ENCODE measurements at regions of chr15 and their contacts with region 1.

Region 1: DNA sequence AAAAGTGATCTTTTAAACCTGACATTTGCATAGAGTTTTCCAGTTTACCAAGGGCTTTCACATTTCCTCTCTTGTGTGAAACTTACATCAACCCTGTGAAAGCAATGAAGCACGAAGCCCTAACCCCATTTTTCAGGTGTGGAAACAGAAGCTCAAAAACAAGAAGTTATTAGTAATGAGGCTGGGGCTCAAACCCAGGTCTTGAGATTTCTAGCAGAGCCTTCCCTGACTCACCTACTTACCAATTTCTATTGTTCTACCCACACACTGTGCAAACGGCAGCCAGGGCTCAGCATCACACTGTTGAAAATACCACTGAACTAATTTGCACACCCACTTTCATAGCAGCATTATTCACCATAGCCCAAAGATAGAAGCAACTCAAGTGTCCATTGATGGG is 117.8 kb upstream of the IGF1R start:
- DNase-seq: no peak
- ATAC-seq: no peak
- H3K4me3 ChIP-seq: no peak overlapping the region
- H3K27ac ChIP-seq: no peak overlapping the region
- H3K4me1 ChIP-seq: peaks cover 17% of the 10 kb centered on the region
- H3K27me3 ChIP-seq: no peaks in the 10 kb centered on the region
- CTCF ChIP-seq: no peak
- POLR2A ChIP-seq: no peak

Region 2: DNA sequence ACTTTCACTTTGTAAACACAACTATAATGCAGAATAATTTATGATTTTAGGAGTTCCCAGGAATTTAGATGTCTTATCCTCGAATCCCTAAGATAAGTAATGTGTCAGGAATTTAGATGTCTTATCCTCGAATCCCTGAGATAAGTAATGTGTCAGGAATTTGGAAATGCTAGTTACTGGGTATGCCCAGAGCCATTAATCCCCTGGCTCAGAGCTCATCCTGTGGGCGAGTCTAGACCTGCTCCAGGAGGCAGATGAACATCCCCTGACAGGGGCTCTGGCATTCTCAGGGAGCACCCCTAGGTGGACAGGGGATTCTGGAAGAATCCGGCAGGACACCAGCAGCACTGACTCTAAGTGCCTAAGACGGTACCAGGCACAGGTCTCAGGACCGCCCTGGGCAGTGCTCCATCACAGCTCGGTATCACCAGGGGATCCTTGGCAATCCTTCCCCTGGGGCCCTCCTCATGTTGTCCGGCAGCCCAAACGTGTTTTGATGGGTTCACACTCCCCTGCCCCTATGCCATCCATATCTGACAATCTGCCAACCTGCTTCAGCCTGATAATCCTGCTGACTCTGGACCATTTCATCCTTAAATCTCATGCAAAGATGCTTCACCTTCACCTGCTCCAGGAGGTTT is 406.6 kb before region 1 on chr15:
- intact Hi-C with region 1: no loop called
- DNase-seq: no peak
- ATAC-seq: no peak
- H3K4me3 ChIP-seq: no peak overlapping the region
- H3K27ac ChIP-seq: no peak overlapping the region
- H3K4me1 ChIP-seq: no peaks in the 10 kb centered on the region
- H3K27me3 ChIP-seq: no peaks in the 10 kb centered on the region
- CTCF ChIP-seq: no peak
- POLR2A ChIP-seq: no peak

Region 3: GRCh38 chr15:98635848-98636247 is 105.3 kb after region 1 on chr15:
- intact Hi-C with region 1: loop called (anchors 10 kb)
- DNase-seq: no peak
- ATAC-seq: no peak
- H3K4me3 ChIP-seq: no peak overlapping the region
- H3K27ac ChIP-seq: no peak overlapping the region
- H3K4me1 ChIP-seq: no peaks in the 10 kb centered on the region
- H3K27me3 ChIP-seq: no peaks in the 10 kb centered on the region
- CTCF ChIP-seq: no peak
- POLR2A ChIP-seq: no peak

Measured in body of pancreas (tissue), 4 donors.